ENCODE measurements at regions of chr2 and their contacts with region 1.

Region 1: DNA sequence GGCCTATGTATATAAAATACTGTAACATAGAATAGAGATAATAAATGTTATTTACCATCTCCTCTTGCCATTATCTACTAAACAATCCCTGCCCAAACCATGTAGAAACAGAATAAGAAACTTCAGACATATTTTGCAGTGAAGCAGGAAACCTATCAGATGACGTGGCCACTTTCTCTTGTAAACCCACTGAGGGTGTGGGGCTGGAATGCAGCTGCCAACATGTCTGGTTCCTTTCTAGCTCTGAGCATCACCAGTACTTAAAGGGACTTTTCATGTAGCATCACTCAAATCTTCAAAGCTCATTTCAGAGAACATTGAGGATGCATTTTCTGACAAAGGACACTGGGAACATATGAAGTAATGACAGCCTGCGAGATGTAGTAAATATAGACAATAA is 251.8 kb downstream of the LPIN1 start:
- DNase-seq: peak; percentile 60
- ATAC-seq: peak; percentile 95
- H3K4me3 ChIP-seq: no peak overlapping the region
- H3K27ac ChIP-seq: peak overlapping the region; percentile 50
- H3K4me1 ChIP-seq: peaks cover 17% of the 10 kb centered on the region
- H3K27me3 ChIP-seq: no peaks in the 10 kb centered on the region
- CTCF ChIP-seq: no peak
- EP300 ChIP-seq: no peak
- POLR2A ChIP-seq: no peak
- RAD21 ChIP-seq: no peak

Region 2: GRCh38 chr2:11977766-11978524 is 20.3 kb before region 1 on chr2:
- CTCF ChIA-PET with region 1: interaction called, 5 read pairs
- POLR2A ChIA-PET with region 1: no interaction called
- RAD21 ChIA-PET with region 1: interaction called, 4 read pairs
- SMC1A ChIA-PET with region 1: interaction called, 10 read pairs
- in situ Hi-C with region 1: no loop called
- intact Hi-C with region 1: no loop called
- DNase-seq: no peak
- ATAC-seq: peak; percentile 80
- H3K4me3 ChIP-seq: no peak overlapping the region
- H3K27ac ChIP-seq: no peak overlapping the region
- H3K4me1 ChIP-seq: peaks cover 7% of the 10 kb centered on the region; the same call in 1 of the 2 replicates
- H3K27me3 ChIP-seq: no peaks in the 10 kb centered on the region
- CTCF ChIP-seq: no peak
- EP300 ChIP-seq: no peak
- POLR2A ChIP-seq: no peak
- RAD21 ChIP-seq: no peak

Region 3: DNA sequence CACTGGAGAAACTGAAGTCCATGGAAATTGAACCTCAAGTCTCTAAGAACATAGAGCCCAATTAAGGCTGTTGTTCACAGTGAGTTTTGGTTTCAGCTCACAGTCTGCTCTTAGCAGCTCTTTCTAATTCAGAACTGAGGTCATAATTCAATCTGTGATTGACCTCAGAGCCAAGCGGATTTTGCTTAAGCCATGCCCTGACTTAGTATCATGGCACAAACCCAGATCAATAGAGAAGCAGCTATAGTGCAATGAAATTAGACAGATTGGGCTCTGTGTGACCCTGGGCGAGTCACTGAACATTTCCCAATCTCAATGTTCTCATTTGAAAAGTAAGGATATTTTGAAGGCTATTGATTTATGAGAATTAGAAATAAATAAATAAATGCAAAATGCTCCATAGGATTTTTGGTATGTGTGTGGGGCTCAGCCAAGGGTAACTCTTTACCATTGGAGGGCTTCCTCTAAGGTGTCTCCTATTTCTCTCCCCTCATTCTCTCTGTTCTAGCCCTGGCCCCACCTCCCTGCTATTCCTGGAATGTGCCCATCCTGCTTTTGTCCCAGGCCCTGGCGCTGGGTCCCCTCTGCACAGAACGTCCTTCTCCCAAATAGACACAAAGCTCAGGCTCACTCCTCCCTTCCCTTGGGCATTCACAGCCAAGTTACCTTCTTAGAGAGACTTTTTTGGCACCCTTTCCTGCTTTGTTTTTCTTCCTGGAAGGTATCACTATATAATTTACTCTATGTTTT is 12.2 kb before region 1 on chr2:
- CTCF ChIA-PET with region 1: interaction called, 3 read pairs
- POLR2A ChIA-PET with region 1: no interaction called
- RAD21 ChIA-PET with region 1: no interaction called
- SMC1A ChIA-PET with region 1: interaction called, 10 read pairs
- in situ Hi-C with region 1: no loop called
- intact Hi-C with region 1: no loop called
- DNase-seq: no peak
- ATAC-seq: peak; percentile 31; the same call in 2 of the 3 replicates
- H3K4me3 ChIP-seq: no peak overlapping the region
- H3K27ac ChIP-seq: no peak overlapping the region
- H3K4me1 ChIP-seq: no peaks in the 10 kb centered on the region
- H3K27me3 ChIP-seq: no peaks in the 10 kb centered on the region
- CTCF ChIP-seq: no peak
- EP300 ChIP-seq: no peak
- POLR2A ChIP-seq: no peak
- RAD21 ChIP-seq: no peak

Region 4: DNA sequence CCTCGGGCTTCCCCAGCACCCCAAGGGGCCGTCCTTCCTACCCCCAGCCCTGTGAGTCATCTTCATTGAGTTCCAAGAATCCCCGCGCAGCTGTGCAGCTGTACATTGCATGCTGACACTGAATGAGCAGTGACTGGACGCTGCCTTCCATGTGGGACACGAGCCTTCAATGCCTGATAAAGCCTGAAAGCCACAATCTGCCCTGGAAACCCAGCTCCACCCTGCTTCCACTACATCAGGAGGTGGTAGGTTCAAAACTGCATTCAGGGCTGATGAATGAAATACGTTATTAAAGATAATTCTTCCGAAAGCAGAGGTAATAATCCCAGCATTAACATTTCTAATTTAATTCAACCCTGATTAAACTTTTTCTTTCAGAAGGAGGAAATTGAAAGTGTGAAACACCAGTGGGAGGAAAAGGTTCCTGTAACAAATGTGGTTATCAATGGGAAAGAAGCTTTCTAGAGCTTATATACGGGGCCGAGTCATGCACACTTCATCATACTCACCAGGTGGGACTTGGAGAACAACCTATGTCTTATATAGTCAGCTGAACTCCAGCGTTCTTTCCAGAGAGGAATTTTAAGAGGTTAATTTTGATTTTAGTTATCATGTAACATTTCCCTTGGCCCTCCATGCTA is 108.3 kb after region 1 on chr2:
- CTCF ChIA-PET with region 1: no interaction called
- POLR2A ChIA-PET with region 1: no interaction called
- RAD21 ChIA-PET with region 1: no interaction called
- SMC1A ChIA-PET with region 1: no interaction called
- in situ Hi-C with region 1: no loop called
- intact Hi-C with region 1: no loop called
- DNase-seq: no peak
- ATAC-seq: peak; percentile 60
- H3K4me3 ChIP-seq: no peak overlapping the region
- H3K27ac ChIP-seq: no peak overlapping the region
- H3K4me1 ChIP-seq: peaks cover 10% of the 10 kb centered on the region
- H3K27me3 ChIP-seq: no peaks in the 10 kb centered on the region
- CTCF ChIP-seq: no peak
- EP300 ChIP-seq: no peak
- POLR2A ChIP-seq: no peak
- RAD21 ChIP-seq: no peak

Region 5: GRCh38 chr2:12244070-12244469 is 245.9 kb after region 1 on chr2:
- CTCF ChIA-PET with region 1: no interaction called
- POLR2A ChIA-PET with region 1: no interaction called
- RAD21 ChIA-PET with region 1: no interaction called
- SMC1A ChIA-PET with region 1: no interaction called
- in situ Hi-C with region 1: no loop called
- intact Hi-C with region 1: no loop called
- DNase-seq: no peak
- ATAC-seq: no peak
- H3K4me3 ChIP-seq: no peak overlapping the region
- H3K27ac ChIP-seq: no peak overlapping the region
- H3K4me1 ChIP-seq: no peaks in the 10 kb centered on the region
- H3K27me3 ChIP-seq: no peaks in the 10 kb centered on the region
- CTCF ChIP-seq: no peak
- EP300 ChIP-seq: no peak
- POLR2A ChIP-seq: no peak
- RAD21 ChIP-seq: no peak

Measured in GM12878 (cell line).